H1 (cell line): ENCODE measurements at regions of chr18 and their contacts with region 1.

Region 1: GRCh38 chr18:5021558-5021957 is 175.5 kb downstream of the AKAIN1 start:
- DNase-seq: no peak
- H3K4me3 ChIP-seq: no peak overlapping the region
- H3K27ac ChIP-seq: no peak overlapping the region
- H3K4me1 ChIP-seq: no peaks in the 10 kb centered on the region; a peak in 1 of 7 replicates
- H3K27me3 ChIP-seq: no peaks in the 10 kb centered on the region
- CTCF ChIP-seq: no peak
- EP300 ChIP-seq: no peak
- POLR2A ChIP-seq: no peak
- RAD21 ChIP-seq: no peak

Region 2: GRCh38 chr18:4765401-4765800 is 256.2 kb before region 1 on chr18:
- CTCF ChIA-PET with region 1: interaction called, 12 read pairs
- POLR2A ChIA-PET with region 1: no interaction called
- DNase-seq: peak; percentile 10 to 58
- H3K4me3 ChIP-seq: no peak overlapping the region
- H3K27ac ChIP-seq: no peak overlapping the region
- H3K4me1 ChIP-seq: peaks cover 0 to 2% (median 0%) of the 10 kb centered on the region in 4 experiments; a peak in 1 of 7 replicates
- H3K27me3 ChIP-seq: no peaks in the 10 kb centered on the region
- CTCF ChIP-seq: peak; percentile 59 to 82 (median 62)
- EP300 ChIP-seq: no peak
- POLR2A ChIP-seq: no peak
- RAD21 ChIP-seq: peak; percentile 81 to 87

Region 3: GRCh38 chr18:4789506-4789905 is 232.1 kb before region 1 on chr18:
- CTCF ChIA-PET with region 1: no interaction called
- POLR2A ChIA-PET with region 1: no interaction called
- DNase-seq: no peak
- H3K4me3 ChIP-seq: no peak overlapping the region
- H3K27ac ChIP-seq: no peak overlapping the region
- H3K4me1 ChIP-seq: no peaks in the 10 kb centered on the region
- H3K27me3 ChIP-seq: no peaks in the 10 kb centered on the region
- CTCF ChIP-seq: no peak
- EP300 ChIP-seq: no peak
- POLR2A ChIP-seq: no peak
- RAD21 ChIP-seq: 0 out of 4 replicates have a peak, but pooled peaks of 1 of the 2 experiments have one; percentile 5

Region 4: GRCh38 chr18:5040476-5040875 is 18.9 kb after region 1 on chr18:
- CTCF ChIA-PET with region 1: interaction called, 11 read pairs
- POLR2A ChIA-PET with region 1: no interaction called
- DNase-seq: no peak
- H3K4me3 ChIP-seq: no peak overlapping the region
- H3K27ac ChIP-seq: no peak overlapping the region
- H3K4me1 ChIP-seq: peaks cover 0 to 4% (median 2%) of the 10 kb centered on the region in 4 experiments; a peak in 2 of 7 replicates
- H3K27me3 ChIP-seq: peaks cover 0 to 9% (median 0%) of the 10 kb centered on the region in 4 experiments; a peak in 3 of 7 replicates
- CTCF ChIP-seq: no peak
- EP300 ChIP-seq: no peak
- POLR2A ChIP-seq: no peak
- RAD21 ChIP-seq: no peak

Region 5: GRCh38 chr18:5159080-5159479 is 137.5 kb after region 1 on chr18:
- CTCF ChIA-PET with region 1: no interaction called
- POLR2A ChIA-PET with region 1: no interaction called
- DNase-seq: no peak
- H3K4me3 ChIP-seq: no peak overlapping the region
- H3K27ac ChIP-seq: no peak overlapping the region
- H3K4me1 ChIP-seq: no peaks in the 10 kb centered on the region
- H3K27me3 ChIP-seq: no peaks in the 10 kb centered on the region
- CTCF ChIP-seq: no peak
- EP300 ChIP-seq: no peak
- POLR2A ChIP-seq: no peak
- RAD21 ChIP-seq: no peak